Psoas muscle (tissue), 8 donors: ENCODE measurements at regions of chr1 and their contacts with region 1.

Region 1: GRCh38 chr1:58903514-58904298 is 119.9 kb upstream of the JUN start:
- DNase-seq: peak; percentile 95 to 97
- ATAC-seq: peak; percentile 90 to 94 (median 92)
- H3K4me3 ChIP-seq: peak overlapping the region; percentile 72
- H3K27ac ChIP-seq: peak overlapping the region; percentile 95
- H3K4me1 ChIP-seq: peaks cover 59% of the 10 kb centered on the region
- H3K27me3 ChIP-seq: no peaks in the 10 kb centered on the region
- CTCF ChIP-seq: no peak

Region 2: DNA sequence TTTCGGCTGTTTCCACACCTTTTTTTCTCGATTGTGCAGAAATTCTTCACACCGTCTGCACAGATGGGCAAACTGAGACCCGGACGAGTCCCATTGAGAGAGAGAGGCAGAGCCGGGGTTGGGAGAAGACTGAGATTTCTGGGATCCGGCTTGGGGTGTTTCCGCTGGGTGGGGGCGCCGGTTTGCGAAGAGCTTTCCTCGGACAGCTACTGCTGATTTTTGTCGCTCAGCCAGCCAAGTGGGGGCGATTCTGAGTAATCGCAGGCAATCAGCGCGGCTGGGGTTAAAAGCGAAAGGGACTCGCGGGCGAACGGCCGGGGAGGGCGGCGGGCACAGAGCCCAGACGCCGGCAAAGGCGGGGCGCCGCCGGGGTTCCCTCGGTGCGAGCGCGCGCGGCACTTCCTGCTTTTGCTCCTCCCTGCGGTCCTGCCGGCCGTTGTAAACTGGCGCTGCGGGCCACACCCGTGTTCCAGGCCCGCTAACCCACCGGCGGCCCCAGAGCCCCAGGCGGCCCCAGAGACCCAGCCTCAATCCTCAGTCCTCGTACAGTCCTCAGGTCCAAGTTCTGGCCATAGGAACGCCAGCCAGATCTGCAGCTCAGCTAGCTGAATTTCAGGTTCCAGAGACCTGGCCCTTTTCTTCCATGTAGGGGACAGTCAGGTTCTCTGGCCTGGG is 87.5 kb before region 1 on chr1:
- intact Hi-C with region 1: loop called in 1 of 2 experiments (anchors 5 kb)
- DNase-seq: peak; percentile 93 to 95
- ATAC-seq: peak; percentile 89 to 94 (median 92)
- H3K4me3 ChIP-seq: peak overlapping the region; percentile 65
- H3K27ac ChIP-seq: peak overlapping the region; percentile 97
- H3K4me1 ChIP-seq: no peaks in the 10 kb centered on the region
- H3K27me3 ChIP-seq: no peaks in the 10 kb centered on the region
- CTCF ChIP-seq: no peak

Region 3: GRCh38 chr1:59015708-59016107 is 112.0 kb after region 1 on chr1:
- intact Hi-C with region 1: loop called in 1 of 2 experiments (anchors 5 kb)
- DNase-seq: no peak
- ATAC-seq: peak in 1 of 4 donors; percentile 30
- H3K4me3 ChIP-seq: no peak overlapping the region
- H3K27ac ChIP-seq: no peak overlapping the region
- H3K4me1 ChIP-seq: peaks cover 43% of the 10 kb centered on the region
- H3K27me3 ChIP-seq: no peaks in the 10 kb centered on the region
- CTCF ChIP-seq: no peak

Region 4: GRCh38 chr1:59100708-59101374 is 197.1 kb after region 1 on chr1:
- intact Hi-C with region 1: no loop called
- DNase-seq: peak in 1 of 2 donors; percentile 67
- ATAC-seq: peak; percentile 89 to 96 (median 95)
- H3K4me3 ChIP-seq: no peak overlapping the region
- H3K27ac ChIP-seq: peak overlapping the region; percentile 71
- H3K4me1 ChIP-seq: peaks cover 14% of the 10 kb centered on the region
- H3K27me3 ChIP-seq: no peaks in the 10 kb centered on the region
- CTCF ChIP-seq: no peak